ENCODE measurements at regions of chr10 and their contacts with region 1.

Region 1: GRCh38 chr10:123559066-123559822 is 106.9 kb upstream of the GPR26 start:
- DNase-seq: peak; percentile 52 to 88 (median 66)
- ATAC-seq: peak; percentile 97
- H3K4me3 ChIP-seq: no peak overlapping the region
- H3K27ac ChIP-seq: no peak overlapping the region
- H3K4me1 ChIP-seq: no peaks in the 10 kb centered on the region
- H3K27me3 ChIP-seq: peaks cover 0 to 51% of the 10 kb centered on the region in 2 donors
- CTCF ChIP-seq: peak; percentile 98 to 99

Region 2: GRCh38 chr10:123043409-123043925 is 515.8 kb before region 1 on chr10:
- intact Hi-C with region 1: loop called in 1 of 2 experiments (anchors 5 kb)
- DNase-seq: peak in 2 of 4 donors; percentile 24 to 54
- ATAC-seq: peak; percentile 83
- H3K4me3 ChIP-seq: no peak overlapping the region
- H3K27ac ChIP-seq: no peak overlapping the region
- H3K4me1 ChIP-seq: peaks cover 0 to 3% of the 10 kb centered on the region in 2 donors
- H3K27me3 ChIP-seq: no peaks in the 10 kb centered on the region
- CTCF ChIP-seq: peak; percentile 40 to 42

Region 3: DNA sequence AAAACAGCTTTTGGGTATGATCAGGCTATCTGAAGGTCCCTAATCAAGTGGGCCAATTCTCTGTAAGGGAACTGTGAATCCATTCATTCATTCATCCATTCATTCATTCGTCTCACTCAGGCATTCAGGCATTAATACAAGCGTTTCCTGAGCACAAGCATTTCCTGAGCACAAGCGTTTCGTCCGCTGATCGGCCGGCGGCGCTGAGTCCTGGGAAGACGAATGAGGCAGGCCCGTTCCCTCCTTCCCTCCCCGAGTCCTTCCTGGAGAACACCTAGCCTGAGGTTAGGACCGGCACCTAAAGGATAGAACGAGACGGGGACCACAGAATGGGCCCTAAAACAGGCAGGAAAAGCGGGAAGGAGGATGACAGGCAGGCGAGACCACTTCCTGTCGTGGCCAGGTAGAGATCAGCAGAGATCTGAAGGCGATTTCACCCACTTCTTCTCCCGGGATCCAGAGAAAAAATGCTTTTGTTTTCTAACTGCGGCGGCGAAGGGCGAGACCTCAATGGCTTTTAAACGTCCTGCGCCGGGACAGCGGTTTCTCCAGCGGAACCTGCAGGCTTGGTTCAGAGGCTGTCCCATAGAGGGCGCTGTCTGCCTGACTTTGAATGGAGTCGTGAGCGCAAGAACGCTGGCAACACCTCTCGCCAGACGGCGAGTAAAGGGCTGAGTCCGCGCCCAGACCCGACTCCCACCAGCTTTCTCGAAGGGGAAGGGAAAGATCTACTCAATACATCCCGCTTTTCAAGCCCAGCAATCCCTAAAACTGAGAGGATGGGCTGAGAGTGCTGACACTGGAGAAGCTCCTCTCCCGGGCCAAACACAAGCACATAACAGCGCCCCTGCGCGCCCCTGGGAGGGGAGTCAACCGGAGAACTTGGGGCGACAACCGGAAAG is 426.4 kb before region 1 on chr10:
- intact Hi-C with region 1: loop called in 1 of 2 experiments (anchors 5 kb)
- DNase-seq: peak; percentile 81 to 90 (median 85)
- ATAC-seq: peak; percentile 98
- H3K4me3 ChIP-seq: no peak overlapping the region
- H3K27ac ChIP-seq: no peak overlapping the region
- H3K4me1 ChIP-seq: peaks cover 26 to 54% of the 10 kb centered on the region in 2 donors
- H3K27me3 ChIP-seq: peaks cover 76 to 100% of the 10 kb centered on the region in 2 donors
- CTCF ChIP-seq: peak; percentile 89

Region 4: GRCh38 chr10:123413353-123413752 is 145.9 kb before region 1 on chr10:
- intact Hi-C with region 1: no loop called
- DNase-seq: no peak
- ATAC-seq: no peak
- H3K4me3 ChIP-seq: no peak overlapping the region
- H3K27ac ChIP-seq: no peak overlapping the region
- H3K4me1 ChIP-seq: no peaks in the 10 kb centered on the region
- H3K27me3 ChIP-seq: no peaks in the 10 kb centered on the region
- CTCF ChIP-seq: no peak

Region 5: DNA sequence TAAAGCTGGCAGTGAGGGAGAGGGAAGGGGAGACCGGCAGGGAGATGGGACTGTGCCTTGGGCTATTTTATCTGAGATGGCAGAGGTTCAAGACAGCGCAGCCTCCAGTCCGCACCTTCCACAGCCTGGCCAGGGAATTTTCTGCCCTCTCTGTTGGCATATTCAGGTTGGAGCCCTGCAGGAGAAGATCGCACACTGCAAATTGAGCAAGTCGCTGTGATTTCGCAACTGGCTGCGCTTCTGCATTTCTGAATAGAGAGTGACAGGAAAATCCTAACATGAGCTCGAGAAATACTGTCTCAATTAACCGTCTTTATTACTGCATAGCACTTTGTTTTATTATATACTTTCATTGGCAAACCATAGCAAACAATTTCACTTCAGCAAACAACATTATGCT is 131.9 kb before region 1 on chr10:
- intact Hi-C with region 1: no loop called
- DNase-seq: peak in 2 of 4 donors; percentile 6 to 43
- ATAC-seq: no peak
- H3K4me3 ChIP-seq: no peak overlapping the region
- H3K27ac ChIP-seq: no peak overlapping the region
- H3K4me1 ChIP-seq: no peaks in the 10 kb centered on the region
- H3K27me3 ChIP-seq: peaks cover 3 to 45% of the 10 kb centered on the region in 2 donors
- CTCF ChIP-seq: no peak

Measured in left lung (tissue), 14 donors.